Naive thymus-derived CD4-positive, alpha-beta T cell (primary cell): ENCODE measurements at regions of chr5 and their contacts with region 1.

Region 1: DNA sequence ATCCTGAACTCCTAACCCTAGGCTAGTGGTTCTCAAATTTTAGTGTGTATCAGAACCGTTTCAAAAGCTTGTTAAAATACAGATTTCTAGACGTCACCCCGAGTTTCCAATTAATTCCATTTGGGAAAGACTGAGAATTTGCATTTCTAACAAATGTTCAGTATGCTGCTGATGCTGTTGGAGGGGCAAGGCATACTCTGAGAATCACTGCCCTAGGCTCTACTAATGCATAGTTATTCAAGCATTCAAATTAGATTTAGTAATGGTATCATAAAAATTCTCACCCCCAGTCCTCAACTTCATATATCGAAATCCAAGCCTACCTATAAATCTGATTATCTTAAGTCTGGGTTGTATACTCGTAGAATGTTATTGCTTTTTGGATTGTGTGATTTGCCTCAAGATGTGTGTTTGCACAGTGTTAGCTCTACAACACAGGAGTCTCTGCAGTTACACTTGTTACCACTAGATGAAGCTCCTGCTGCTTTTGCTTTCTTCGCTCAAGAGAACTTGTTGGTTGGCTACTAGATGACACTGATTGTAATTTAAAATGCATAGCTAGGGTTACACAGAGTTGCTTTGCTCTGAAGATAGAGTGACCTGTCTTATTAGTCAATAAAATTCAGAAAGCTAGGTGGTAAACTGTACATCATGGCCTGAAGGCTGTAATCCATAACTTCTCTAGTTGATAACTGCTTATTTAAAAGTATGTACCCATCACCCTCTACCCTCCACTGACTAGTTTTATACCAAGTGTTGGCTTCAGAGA is 7.5 kb upstream of the ERAP2 start:
- DNase-seq: peak in 7 of 9 donors; percentile 45 to 75 (median 58)
- ATAC-seq: peak; percentile 97
- H3K4me3 ChIP-seq: no peak overlapping the region
- H3K4me3 Mint-ChIP-seq: peak overlapping the region in 3 of 10 donors; percentile 1 to 63 (median 29)
- H3K27ac ChIP-seq: no peak overlapping the region
- H3K27ac Mint-ChIP-seq: peak overlapping the region in 6 of 9 donors; percentile 10 to 93 (median 42)
- H3K4me1 ChIP-seq: peaks cover 0 to 40% of the 10 kb centered on the region in 2 donors
- H3K4me1 Mint-ChIP-seq: peaks cover 15 to 49% (median 47%) of the 10 kb centered on the region in 7 donors
- H3K27me3 ChIP-seq: no peaks in the 10 kb centered on the region
- H3K27me3 Mint-ChIP-seq: peaks cover 0 to 4% (median 0%) of the 10 kb centered on the region in 5 donors

Region 2: GRCh38 chr5:96807075-96807654 is 61.6 kb before region 1 on chr5:
- CTCF ChIA-PET with region 1: interaction called, 5 read pairs
- POLR2A ChIA-PET with region 1: interaction called, 19 read pairs
- intact Hi-C with region 1: loop called in 1 of 2 experiments (anchors 2 kb)
- DNase-seq: peak in 1 of 9 donors; percentile 67
- ATAC-seq: peak; percentile 17
- H3K4me3 ChIP-seq: peak overlapping the region; percentile 85
- H3K4me3 Mint-ChIP-seq: peak overlapping the region; percentile 90 to 100 (median 96)
- H3K27ac ChIP-seq: peak overlapping the region; percentile 99
- H3K27ac Mint-ChIP-seq: peak overlapping the region; percentile 98 to 100 (median 99)
- H3K4me1 ChIP-seq: peaks cover 40 to 69% of the 10 kb centered on the region in 2 donors
- H3K4me1 Mint-ChIP-seq: peaks cover 57 to 92% (median 89%) of the 10 kb centered on the region in 7 donors
- H3K27me3 ChIP-seq: no peaks in the 10 kb centered on the region
- H3K27me3 Mint-ChIP-seq: peaks cover 0 to 2% (median 0%) of the 10 kb centered on the region in 5 donors

Region 3: GRCh38 chr5:96896806-96897205 is 28.0 kb after region 1 on chr5:
- CTCF ChIA-PET with region 1: interaction called, 16 read pairs
- POLR2A ChIA-PET with region 1: interaction called, 57 read pairs
- intact Hi-C with region 1: loop called (anchors 1 kb)
- DNase-seq: no peak
- ATAC-seq: peak; percentile 73
- H3K4me3 ChIP-seq: peak overlapping the region; percentile 36
- H3K4me3 Mint-ChIP-seq: peak overlapping the region; percentile 67 to 88 (median 79)
- H3K27ac ChIP-seq: peak overlapping the region; percentile 69
- H3K27ac Mint-ChIP-seq: peak overlapping the region; percentile 83 to 98 (median 94)
- H3K4me1 ChIP-seq: peaks cover 6 to 17% of the 10 kb centered on the region in 2 donors
- H3K4me1 Mint-ChIP-seq: peaks cover 26 to 71% (median 68%) of the 10 kb centered on the region in 7 donors
- H3K27me3 ChIP-seq: no peaks in the 10 kb centered on the region
- H3K27me3 Mint-ChIP-seq: no peaks in the 10 kb centered on the region

Region 4: DNA sequence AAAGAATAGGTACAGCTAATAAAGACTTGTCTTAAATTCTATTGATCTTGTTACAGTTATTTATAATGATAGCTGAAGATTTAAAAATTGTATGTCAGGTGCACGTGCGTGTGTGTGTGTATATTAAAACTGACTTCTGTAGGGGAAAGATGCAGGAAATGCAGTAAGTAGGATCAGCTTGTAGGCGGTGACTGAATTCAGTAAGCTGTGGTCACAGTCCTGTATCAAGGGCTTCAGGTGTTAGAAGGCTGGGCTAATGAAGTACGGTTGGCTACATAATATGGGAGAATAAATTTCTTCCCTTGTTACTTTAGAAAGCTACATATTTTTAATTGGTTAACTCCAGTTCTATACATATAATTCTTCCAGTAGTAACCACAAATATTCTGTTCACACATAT is 121.3 kb after region 1 on chr5:
- CTCF ChIA-PET with region 1: interaction called, 15 read pairs
- POLR2A ChIA-PET with region 1: no interaction called
- intact Hi-C with region 1: loop called in 1 of 2 experiments (anchors 5 kb)
- DNase-seq: no peak
- ATAC-seq: no peak
- H3K4me3 ChIP-seq: no peak overlapping the region
- H3K4me3 Mint-ChIP-seq: no peak overlapping the region
- H3K27ac ChIP-seq: no peak overlapping the region
- H3K27ac Mint-ChIP-seq: peak overlapping the region in 7 of 9 donors; percentile 0 to 73 (median 17)
- H3K4me1 ChIP-seq: no peaks in the 10 kb centered on the region
- H3K4me1 Mint-ChIP-seq: peaks cover 12 to 63% (median 56%) of the 10 kb centered on the region in 7 donors
- H3K27me3 ChIP-seq: no peaks in the 10 kb centered on the region
- H3K27me3 Mint-ChIP-seq: no peaks in the 10 kb centered on the region

Region 5: GRCh38 chr5:97046270-97046982 is 177.6 kb after region 1 on chr5:
- CTCF ChIA-PET with region 1: interaction called, 4 read pairs
- POLR2A ChIA-PET with region 1: no interaction called
- intact Hi-C with region 1: loop called (anchors 1 kb)
- DNase-seq: peak in 1 of 9 donors; percentile 9
- ATAC-seq: no peak
- H3K4me3 ChIP-seq: no peak overlapping the region
- H3K4me3 Mint-ChIP-seq: no peak overlapping the region
- H3K27ac ChIP-seq: no peak overlapping the region
- H3K27ac Mint-ChIP-seq: peak overlapping the region in 1 of 9 donors; percentile 35
- H3K4me1 ChIP-seq: no peaks in the 10 kb centered on the region
- H3K4me1 Mint-ChIP-seq: peaks cover 0 to 7% (median 0%) of the 10 kb centered on the region in 7 donors
- H3K27me3 ChIP-seq: no peaks in the 10 kb centered on the region
- H3K27me3 Mint-ChIP-seq: peaks cover 0 to 31% (median 0%) of the 10 kb centered on the region in 5 donors

Region 6: GRCh38 chr5:97094579-97095317 is 226.0 kb after region 1 on chr5:
- CTCF ChIA-PET with region 1: no interaction called
- POLR2A ChIA-PET with region 1: no interaction called
- intact Hi-C with region 1: no loop called
- DNase-seq: peak in 1 of 9 donors; percentile 28
- ATAC-seq: no peak
- H3K4me3 ChIP-seq: no peak overlapping the region
- H3K4me3 Mint-ChIP-seq: peak overlapping the region in 1 of 10 donors; percentile 62
- H3K27ac ChIP-seq: no peak overlapping the region
- H3K27ac Mint-ChIP-seq: peak overlapping the region in 1 of 9 donors; percentile 63
- H3K4me1 ChIP-seq: no peaks in the 10 kb centered on the region
- H3K4me1 Mint-ChIP-seq: peaks cover 0 to 20% (median 5%) of the 10 kb centered on the region in 7 donors
- H3K27me3 ChIP-seq: no peaks in the 10 kb centered on the region
- H3K27me3 Mint-ChIP-seq: peaks cover 0 to 43% (median 1%) of the 10 kb centered on the region in 5 donors

Region 7: GRCh38 chr5:97183100-97183929 is 314.5 kb after region 1 on chr5 and contains the start of gene RIOK2:
- CTCF ChIA-PET with region 1: no interaction called
- POLR2A ChIA-PET with region 1: no interaction called
- intact Hi-C with region 1: loop called in 1 of 2 experiments (anchors 5 kb)
- DNase-seq: peak; percentile 77 to 93 (median 91)
- ATAC-seq: peak; percentile 96
- H3K4me3 ChIP-seq: peak within 1 kb of the TSS; percentile 82
- H3K4me3 Mint-ChIP-seq: peak within 1 kb of the TSS; percentile 89 to 98 (median 94)
- H3K27ac ChIP-seq: peak within 1 kb of the TSS; percentile 94
- H3K27ac Mint-ChIP-seq: peak within 1 kb of the TSS; percentile 99 to 100 (median 100)
- H3K4me1 ChIP-seq: peaks cover 4 to 14% of the 10 kb centered on the region in 2 donors
- H3K4me1 Mint-ChIP-seq: peaks cover 23 to 54% (median 44%) of the 10 kb centered on the region in 7 donors
- H3K27me3 ChIP-seq: no peaks in the 10 kb centered on the region
- H3K27me3 Mint-ChIP-seq: peaks cover 0 to 3% (median 0%) of the 10 kb centered on the region in 5 donors
- total RNA-seq, gene RIOK2: 18.8 to 36.0 (median 28.5) TPM